Mammary epithelial cell (primary cell): ENCODE measurements at regions of chr11 and their contacts with region 1.

Region 1: DNA sequence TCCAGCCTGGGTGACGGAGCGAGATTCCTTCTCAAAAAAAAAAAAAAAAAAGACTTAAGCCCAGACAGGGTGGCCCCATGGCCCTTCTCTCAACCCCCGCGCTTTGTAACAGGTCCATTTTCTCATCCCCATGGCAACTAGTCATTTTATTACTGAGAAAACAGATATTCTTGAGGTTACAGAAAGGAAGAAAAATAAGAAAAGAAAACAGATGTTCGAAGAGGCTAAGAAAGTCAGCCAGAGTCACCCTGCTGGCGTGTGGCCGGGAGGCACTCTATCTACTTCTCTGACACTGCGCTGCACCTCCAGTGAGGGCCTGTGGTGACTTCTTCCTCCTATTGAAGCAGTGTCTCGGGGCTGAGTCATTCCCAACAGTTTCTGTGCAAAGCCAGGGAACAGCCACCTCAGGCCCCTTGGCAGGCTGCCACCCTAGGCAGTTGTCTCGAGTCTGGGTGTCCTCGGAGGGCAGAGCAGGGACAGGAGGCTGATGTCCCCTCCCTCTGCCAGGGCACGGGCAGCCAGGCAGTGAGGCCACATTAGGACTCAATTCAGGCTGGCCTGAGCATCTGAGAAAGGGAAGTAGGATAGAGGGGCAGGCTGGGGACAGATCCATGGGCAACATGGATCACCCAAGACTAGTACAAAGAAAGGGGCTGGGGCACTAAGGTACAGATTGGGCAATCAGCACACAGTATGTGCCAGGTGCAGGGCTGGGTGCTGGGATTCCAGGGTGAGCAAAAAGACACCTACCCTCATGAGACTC is 16.4 kb upstream of the SYVN1 start:
- DNase-seq: peak; percentile 93
- H3K4me3 ChIP-seq: peak overlapping the region in 1 of 3 experiments; percentile 11
- H3K27ac ChIP-seq: peak overlapping the region; percentile 70
- H3K4me1 ChIP-seq: peaks cover 18% of the 10 kb centered on the region
- H3K27me3 ChIP-seq: no peaks in the 10 kb centered on the region
- CTCF ChIP-seq: peak in 1 of 2 donors; percentile 15

Region 2: DNA sequence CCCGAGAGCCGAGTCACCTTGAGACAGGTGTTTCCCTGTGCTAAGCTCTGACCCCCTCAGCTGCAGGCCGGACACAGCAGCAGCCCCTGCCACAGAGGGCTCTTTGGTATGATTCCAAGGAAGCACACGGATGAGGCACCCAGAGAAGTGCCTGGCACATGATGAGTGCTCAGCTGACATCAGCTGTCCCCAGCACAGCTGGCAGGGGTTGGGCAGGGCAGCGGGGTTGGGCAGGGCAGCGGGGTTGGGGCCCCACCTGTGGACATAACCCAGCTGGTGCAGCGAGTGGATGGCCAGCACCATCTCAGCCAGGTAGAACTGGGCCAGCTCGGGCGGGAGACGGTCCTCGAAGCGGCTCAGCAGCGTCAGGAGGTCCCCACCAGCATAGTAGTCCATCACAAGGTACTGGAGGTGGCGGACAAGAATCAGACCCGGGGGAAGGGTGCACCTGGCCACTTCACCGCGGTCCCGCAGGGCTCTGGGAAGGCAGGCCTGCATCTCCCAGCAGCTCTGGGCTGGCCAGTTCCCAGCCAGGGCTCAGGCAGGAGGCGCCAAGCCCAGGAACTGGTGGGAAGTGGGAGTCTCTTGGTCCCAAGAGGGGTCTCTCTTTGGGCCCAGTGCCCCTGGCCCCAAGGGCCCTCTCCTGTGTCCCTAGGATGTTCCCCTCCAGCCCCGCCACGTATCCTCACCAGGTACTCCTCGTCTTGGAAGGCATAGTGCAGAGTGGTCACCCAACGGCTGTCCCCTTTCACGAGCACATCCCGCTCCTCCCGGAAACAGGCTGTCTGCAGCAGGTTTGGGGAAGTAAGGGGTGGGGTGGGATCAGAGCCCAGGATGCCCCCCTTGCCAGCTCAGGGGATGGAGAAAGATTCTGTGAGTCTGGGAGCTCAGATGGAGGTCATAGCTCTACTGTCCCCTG is 310.6 kb before region 1 on chr11:
- CTCF ChIA-PET with region 1: interaction called, 20 read pairs
- dilution Hi-C with region 1: no loop called
- in situ Hi-C with region 1: no loop called
- intact Hi-C with region 1: no loop called
- DNase-seq: no peak
- H3K4me3 ChIP-seq: no peak overlapping the region
- H3K27ac ChIP-seq: no peak overlapping the region
- H3K4me1 ChIP-seq: peaks cover 41% of the 10 kb centered on the region
- H3K27me3 ChIP-seq: no peaks in the 10 kb centered on the region
- CTCF ChIP-seq: no peak

Region 3: DNA sequence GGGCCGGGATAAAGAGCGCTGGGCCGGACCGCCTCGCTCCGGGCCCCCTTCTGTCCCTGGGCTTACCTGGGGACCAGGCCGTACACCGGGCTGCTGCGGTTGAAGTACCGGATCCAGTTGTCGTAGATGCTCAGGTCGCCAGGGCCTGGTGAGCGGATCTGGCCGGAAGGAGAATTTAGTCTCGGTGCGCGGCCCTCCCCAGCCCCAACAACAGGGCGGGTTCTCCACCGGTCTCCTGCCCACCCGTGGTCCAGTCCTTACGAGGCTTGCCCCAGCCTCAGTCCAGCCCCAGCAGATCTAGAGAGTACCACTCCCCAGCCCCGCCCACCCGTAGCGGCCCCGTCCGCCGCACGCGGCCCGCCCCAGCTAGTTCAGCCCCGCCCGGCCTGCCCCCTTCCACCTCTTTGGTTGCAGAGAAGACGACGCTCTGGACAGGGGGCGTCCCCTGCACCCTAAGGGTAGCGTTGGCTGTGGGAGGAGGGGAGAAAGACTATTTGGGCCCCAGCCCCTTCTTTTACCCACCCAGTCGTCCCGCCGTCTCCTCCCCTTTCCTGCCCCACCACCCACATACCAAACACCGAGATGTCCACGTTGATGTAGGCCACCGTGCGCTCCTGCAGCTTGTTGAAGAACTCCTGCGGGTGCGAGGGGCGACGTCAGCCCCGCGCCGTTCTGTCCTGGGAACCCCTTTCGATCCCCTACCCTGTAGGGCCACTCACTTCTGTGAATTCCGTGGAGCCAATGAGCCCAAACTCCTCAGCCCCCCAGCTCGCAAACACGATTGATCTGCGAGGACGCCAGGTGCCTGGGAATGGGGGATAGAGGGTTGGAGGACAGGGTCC is 102.9 kb before region 1 on chr11:
- CTCF ChIA-PET with region 1: no interaction called
- dilution Hi-C with region 1: loop called (anchors 5 kb)
- in situ Hi-C with region 1: no loop called
- intact Hi-C with region 1: no loop called
- DNase-seq: no peak
- H3K4me3 ChIP-seq: no peak overlapping the region
- H3K27ac ChIP-seq: no peak overlapping the region
- H3K4me1 ChIP-seq: peaks cover 9% of the 10 kb centered on the region
- H3K27me3 ChIP-seq: no peaks in the 10 kb centered on the region
- CTCF ChIP-seq: no peak